ENCODE measurements at regions of chrX and their contacts with region 1.

Region 1: DNA sequence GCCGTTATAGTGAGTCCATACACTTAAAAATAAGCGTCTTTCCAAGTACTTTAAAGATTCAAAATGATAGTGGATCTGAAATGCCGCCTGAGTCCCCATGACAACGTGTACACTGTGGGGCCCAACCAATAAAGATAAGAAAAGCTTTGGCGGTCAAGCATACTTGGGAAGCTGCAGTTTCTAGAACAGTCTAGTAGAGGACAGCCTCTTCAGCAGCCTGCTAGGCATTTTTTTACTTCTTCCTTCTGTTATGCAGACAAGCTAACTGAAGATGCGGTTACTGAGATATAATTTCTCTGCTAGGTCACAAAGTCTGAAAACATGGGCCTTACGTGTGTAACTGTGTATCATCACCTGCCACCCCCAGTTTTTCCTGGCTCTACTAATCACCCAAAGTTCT is 402 bp upstream of the UPRT start:
- DNase-seq: no peak
- ATAC-seq: peak in 1 of 4 donors; percentile 34
- H3K4me3 ChIP-seq: peak overlapping the region; percentile 78
- H3K27ac ChIP-seq: peak overlapping the region; percentile 87
- H3K4me1 ChIP-seq: no peaks in the 10 kb centered on the region
- H3K27me3 ChIP-seq: no peaks in the 10 kb centered on the region
- CTCF ChIP-seq: no peak

Region 2: GRCh38 chrX:74614093-74614909 is 659.2 kb before region 1 on chrX and contains the start of gene RLIM:
- intact Hi-C with region 1: loop called in 1 of 2 experiments (anchors 10 kb)
- DNase-seq: peak; percentile 91 to 96
- ATAC-seq: peak; percentile 98 to 99 (median 98)
- H3K4me3 ChIP-seq: peak within 1 kb of the TSS; percentile 83
- H3K27ac ChIP-seq: peak within 1 kb of the TSS; percentile 95
- H3K4me1 ChIP-seq: no peaks in the 10 kb centered on the region
- H3K27me3 ChIP-seq: peaks cover 0 to 8% (median 0%) of the 10 kb centered on the region in 3 donors
- CTCF ChIP-seq: no peak
- total RNA-seq, gene RLIM: 20.5 to 29.6 (median 25.5) TPM

Region 3: GRCh38 chrX:75156021-75156945 is 117.2 kb before region 1 on chrX and contains the start of gene ABCB7:
- intact Hi-C with region 1: loop called in 1 of 2 experiments (anchors 10 kb)
- DNase-seq: peak; percentile 35 to 72
- ATAC-seq: peak; percentile 75 to 93 (median 83)
- H3K4me3 ChIP-seq: peak within 1 kb of the TSS; percentile 71
- H3K27ac ChIP-seq: peak within 1 kb of the TSS; percentile 81
- H3K4me1 ChIP-seq: peaks cover 8% of the 10 kb centered on the region
- H3K27me3 ChIP-seq: no peaks in the 10 kb centered on the region
- CTCF ChIP-seq: peak; percentile 22
- total RNA-seq, gene ABCB7: 23.6 to 39.6 (median 26.8) TPM

Region 4: DNA sequence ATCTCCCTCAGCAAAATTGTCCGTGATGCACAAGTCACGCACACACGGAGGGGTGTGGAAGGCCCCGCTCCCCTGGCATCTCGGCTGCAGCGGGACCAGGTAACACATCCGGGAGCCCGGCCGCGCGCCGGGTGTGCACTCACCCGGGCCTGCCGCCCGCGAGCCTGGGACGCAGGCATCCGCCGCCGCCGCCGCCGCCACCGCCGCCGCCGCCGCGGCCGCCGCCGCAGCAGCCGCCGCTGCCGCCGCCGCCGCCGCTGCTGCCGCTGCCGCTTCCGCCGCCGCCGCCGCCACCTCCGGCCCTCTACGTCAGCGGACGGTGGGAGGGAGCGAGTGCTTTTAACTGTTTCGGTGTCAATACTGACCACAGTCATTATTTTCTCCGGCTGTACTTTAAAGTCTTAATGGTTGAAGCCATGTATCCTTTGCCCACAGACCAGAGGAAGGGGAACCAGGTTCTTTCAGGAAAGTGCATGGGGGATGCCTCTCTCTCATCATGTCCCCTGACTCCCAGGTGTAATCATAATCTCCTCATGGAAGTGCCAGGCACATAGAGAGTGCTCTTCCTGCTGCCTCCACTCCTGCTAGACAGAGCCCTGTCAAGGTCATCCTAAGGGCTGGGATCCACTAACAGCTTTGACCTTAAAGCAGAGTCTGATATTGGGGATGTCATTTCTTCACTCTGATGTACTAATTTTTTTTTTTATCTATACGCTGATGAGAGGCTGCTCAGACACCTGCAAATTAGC is 473.6 kb after region 1 on chrX:
- intact Hi-C with region 1: loop called in 1 of 2 experiments (anchors 10 kb)
- DNase-seq: peak; percentile 19 to 63
- ATAC-seq: peak in 3 of 4 donors; percentile 62 to 76 (median 73)
- H3K4me3 ChIP-seq: peak overlapping the region; percentile 66
- H3K27ac ChIP-seq: no peak overlapping the region
- H3K4me1 ChIP-seq: no peaks in the 10 kb centered on the region
- H3K27me3 ChIP-seq: no peaks in the 10 kb centered on the region
- CTCF ChIP-seq: no peak